ENCODE measurements at regions of chr2 and their contacts with region 1.

Region 1: DNA sequence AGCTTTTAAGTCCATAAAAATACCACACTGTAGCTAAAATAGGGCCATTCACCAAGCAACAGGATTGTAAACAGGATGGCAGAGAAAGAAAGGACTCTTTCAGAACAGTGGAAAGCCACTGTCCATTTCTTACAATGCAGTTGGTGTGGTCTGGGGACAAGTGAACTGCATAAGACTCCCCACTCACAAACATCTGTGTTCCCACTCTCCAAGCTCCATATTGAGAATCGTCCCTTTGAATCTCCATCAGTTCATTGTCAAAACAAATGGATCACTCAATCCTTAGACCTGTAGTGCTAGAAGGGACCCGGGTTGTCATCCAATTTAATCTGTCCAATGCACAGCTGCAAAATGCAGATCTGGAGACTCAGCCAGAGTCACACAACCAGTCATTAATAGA is 347.4 kb upstream of the KLHL29 start:
- DNase-seq: peak in 3 of 10 donors; percentile 10 to 52 (median 47)
- H3K4me3 ChIP-seq: no peak overlapping the region
- H3K27ac ChIP-seq: peak overlapping the region in 2 of 59 donors; percentile 61 to 62
- H3K27me3 ChIP-seq: peaks cover 0 to 45% (median 0%) of the 10 kb centered on the region in 45 donors
- CTCF ChIP-seq: peak in 4 of 56 donors; percentile 10 to 27 (median 17)

Region 2: DNA sequence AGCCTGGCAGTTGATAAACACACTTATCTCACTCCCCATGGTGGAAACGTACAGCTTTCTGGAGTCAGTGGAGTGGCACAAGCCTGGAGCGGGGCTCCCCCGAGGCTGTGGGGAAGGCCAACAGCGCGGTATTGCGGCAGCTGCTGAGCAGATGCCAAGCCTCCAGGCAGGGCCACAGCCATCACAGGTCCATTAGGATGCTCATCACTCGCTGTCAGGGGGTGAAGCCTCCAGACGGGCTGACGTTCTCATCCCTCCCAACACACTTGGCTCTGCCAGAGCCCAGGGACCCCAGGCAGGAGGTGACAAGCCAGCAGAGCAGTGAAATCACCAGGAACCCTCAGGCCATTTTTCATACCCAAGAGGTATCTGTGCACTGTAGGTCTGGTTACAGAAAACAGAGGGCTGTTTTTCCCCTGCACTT is 181.8 kb before region 1 on chr2:
- intact Hi-C with region 1: loop called in 1 of 2 experiments (anchors 5 kb)
- DNase-seq: peak in 8 of 10 donors; percentile 19 to 58 (median 46)
- H3K4me3 ChIP-seq: peak overlapping the region in 3 of 59 donors; percentile 2 to 46 (median 20)
- H3K27ac ChIP-seq: peak overlapping the region in 58 of 59 donors; percentile 35 to 97 (median 86)
- H3K27me3 ChIP-seq: no peaks in the 10 kb centered on the region
- CTCF ChIP-seq: peak in 1 of 56 donors; percentile 4